CD4-positive, alpha-beta T cell (primary cell): ENCODE measurements at regions of chr5 and their contacts with region 1.

Region 1: DNA sequence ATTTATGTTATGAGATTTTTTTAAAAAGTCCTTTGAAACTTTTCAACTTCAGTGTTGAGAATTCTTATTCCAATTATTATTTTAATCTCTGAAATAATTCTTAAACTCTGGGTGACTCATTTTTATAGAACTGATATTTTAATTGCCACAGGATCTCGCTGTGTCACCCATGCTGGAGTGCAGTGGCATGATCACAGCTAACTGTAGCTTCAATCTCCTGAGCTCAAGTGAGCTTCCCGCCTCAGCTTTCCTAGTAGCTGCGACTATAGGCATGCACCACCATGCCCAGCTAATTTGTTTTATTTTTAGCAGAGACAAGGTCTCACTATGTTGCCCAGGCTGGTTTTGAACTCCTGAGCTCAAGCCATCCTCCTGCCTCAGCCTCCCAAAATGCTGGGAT is 41.0 kb downstream of the DIMT1 start:
- DNase-seq: no peak
- ATAC-seq: no peak
- H3K4me3 ChIP-seq: no peak overlapping the region
- H3K4me3 Mint-ChIP-seq: no peak overlapping the region
- H3K27ac ChIP-seq: no peak overlapping the region
- H3K27ac Mint-ChIP-seq: no peak overlapping the region
- H3K4me1 ChIP-seq: no peaks in the 10 kb centered on the region
- H3K4me1 Mint-ChIP-seq: no peaks in the 10 kb centered on the region
- H3K27me3 ChIP-seq: no peaks in the 10 kb centered on the region
- H3K27me3 Mint-ChIP-seq: no peaks in the 10 kb centered on the region
- CTCF ChIP-seq: no peak

Region 2: GRCh38 chr5:62395210-62395950 is 32.7 kb after region 1 on chr5:
- CTCF ChIA-PET with region 1: no interaction called
- POLR2A ChIA-PET with region 1: no interaction called
- intact Hi-C with region 1: loop called in 1 of 2 experiments (anchors 5 kb)
- DNase-seq: no peak
- ATAC-seq: no peak
- H3K4me3 ChIP-seq: no peak overlapping the region
- H3K4me3 Mint-ChIP-seq: no peak overlapping the region
- H3K27ac ChIP-seq: no peak overlapping the region
- H3K27ac Mint-ChIP-seq: peak overlapping the region; percentile 12
- H3K4me1 ChIP-seq: no peaks in the 10 kb centered on the region
- H3K4me1 Mint-ChIP-seq: peaks cover 15% of the 10 kb centered on the region
- H3K27me3 ChIP-seq: no peaks in the 10 kb centered on the region
- H3K27me3 Mint-ChIP-seq: no peaks in the 10 kb centered on the region
- CTCF ChIP-seq: no peak